ENCODE measurements at regions of chr2 and their contacts with region 1.

Region 1: GRCh38 chr2:168336864-168337263 is 89.5 kb upstream of the STK39 start:
- DNase-seq: peak; percentile 62
- ATAC-seq: peak; percentile 90
- H3K4me3 Mint-ChIP-seq: no peak overlapping the region
- H3K27ac Mint-ChIP-seq: no peak overlapping the region
- H3K4me1 Mint-ChIP-seq: no peaks in the 10 kb centered on the region
- H3K27me3 Mint-ChIP-seq: no peaks in the 10 kb centered on the region

Region 2: GRCh38 chr2:168138374-168138773 is 198.5 kb before region 1 on chr2:
- CTCF ChIA-PET with region 1: interaction called, 14 read pairs
- POLR2A ChIA-PET with region 1: no interaction called
- DNase-seq: no peak
- ATAC-seq: no peak
- H3K4me3 Mint-ChIP-seq: no peak overlapping the region
- H3K27ac Mint-ChIP-seq: no peak overlapping the region
- H3K4me1 Mint-ChIP-seq: peaks cover 8% of the 10 kb centered on the region
- H3K27me3 Mint-ChIP-seq: no peaks in the 10 kb centered on the region

Region 3: DNA sequence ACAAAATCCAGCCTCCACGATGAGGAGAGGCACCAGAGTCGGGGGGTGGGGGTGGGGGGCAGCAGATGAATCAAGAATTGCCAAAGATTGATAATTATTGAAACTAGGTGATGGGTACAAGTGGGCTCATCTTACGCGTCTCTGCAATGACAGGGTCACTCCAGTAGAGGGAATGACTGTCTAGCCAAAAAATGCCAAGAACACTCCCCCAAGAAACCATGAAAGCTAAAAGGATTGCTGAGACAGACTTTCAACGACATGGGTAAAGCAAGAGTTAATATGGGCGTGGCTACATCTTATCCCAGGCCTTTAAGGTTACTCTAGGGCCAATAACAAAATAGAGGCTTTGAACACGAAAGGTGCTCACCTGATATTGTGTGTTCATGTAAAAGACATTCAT is 176.0 kb before region 1 on chr2:
- CTCF ChIA-PET with region 1: interaction called, 28 read pairs
- POLR2A ChIA-PET with region 1: no interaction called
- DNase-seq: no peak
- ATAC-seq: no peak
- H3K4me3 Mint-ChIP-seq: no peak overlapping the region
- H3K27ac Mint-ChIP-seq: no peak overlapping the region
- H3K4me1 Mint-ChIP-seq: peaks cover 19% of the 10 kb centered on the region
- H3K27me3 Mint-ChIP-seq: no peaks in the 10 kb centered on the region

Region 4: DNA sequence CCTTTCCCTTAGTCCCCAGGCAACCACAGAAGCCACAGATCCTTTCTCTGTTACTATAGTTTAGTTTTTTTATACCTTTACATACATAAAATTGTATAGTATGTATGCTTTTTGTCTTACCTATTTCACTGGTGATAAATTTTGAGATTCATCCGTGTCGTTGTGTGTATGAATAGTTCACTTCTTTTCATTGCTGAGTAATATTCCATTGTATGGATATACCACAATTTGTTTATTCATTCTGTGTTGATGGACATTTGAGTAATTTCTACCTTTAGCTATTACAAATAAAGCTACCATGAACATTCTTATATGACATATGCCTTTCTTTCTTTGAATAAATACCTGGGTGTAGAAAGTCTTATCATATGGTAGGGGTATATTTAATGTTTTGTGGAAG is 16.4 kb after region 1 on chr2:
- CTCF ChIA-PET with region 1: no interaction called
- POLR2A ChIA-PET with region 1: no interaction called
- DNase-seq: no peak
- ATAC-seq: no peak
- H3K4me3 Mint-ChIP-seq: no peak overlapping the region
- H3K27ac Mint-ChIP-seq: no peak overlapping the region
- H3K4me1 Mint-ChIP-seq: peaks cover 22% of the 10 kb centered on the region
- H3K27me3 Mint-ChIP-seq: no peaks in the 10 kb centered on the region